Ascending aorta (tissue), 2 donors: ENCODE measurements at regions of chr4 and their contacts with region 1.

Region 1: DNA sequence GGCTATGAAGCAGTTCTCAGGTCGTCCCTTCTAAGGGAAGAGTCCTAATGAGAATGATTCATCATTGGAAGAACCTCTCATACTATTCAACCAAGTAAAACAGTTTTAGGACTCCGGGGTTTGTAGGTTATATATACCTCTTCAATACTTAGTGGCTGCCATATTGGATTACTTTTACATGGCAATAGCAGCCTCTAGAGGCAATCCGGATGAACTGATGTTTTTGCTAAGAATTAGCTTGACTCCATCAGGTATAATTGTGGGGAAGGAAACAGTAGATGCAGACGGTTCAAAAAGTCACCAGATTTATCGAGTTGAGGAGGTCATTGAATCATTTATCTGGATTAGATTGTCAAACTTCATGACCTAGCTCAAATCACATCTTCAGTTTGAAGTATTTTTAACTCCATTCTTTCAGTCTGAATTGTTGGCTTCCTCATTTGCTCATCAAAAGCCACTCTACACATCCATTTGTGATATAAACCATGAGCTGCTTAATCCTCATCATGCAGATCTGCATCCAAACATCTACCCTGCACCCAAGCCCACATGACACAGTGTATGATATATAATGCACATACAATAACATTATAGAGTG is 28.4 kb downstream of the GUCY1B1 start:
- DNase-seq: no peak
- H3K4me3 ChIP-seq: no peak overlapping the region
- H3K27ac ChIP-seq: no peak overlapping the region
- H3K4me1 ChIP-seq: peaks cover 0 to 8% of the 10 kb centered on the region in 2 donors
- H3K27me3 ChIP-seq: no peaks in the 10 kb centered on the region
- CTCF ChIP-seq: peak; percentile 47 to 75 (median 69)

Region 2: DNA sequence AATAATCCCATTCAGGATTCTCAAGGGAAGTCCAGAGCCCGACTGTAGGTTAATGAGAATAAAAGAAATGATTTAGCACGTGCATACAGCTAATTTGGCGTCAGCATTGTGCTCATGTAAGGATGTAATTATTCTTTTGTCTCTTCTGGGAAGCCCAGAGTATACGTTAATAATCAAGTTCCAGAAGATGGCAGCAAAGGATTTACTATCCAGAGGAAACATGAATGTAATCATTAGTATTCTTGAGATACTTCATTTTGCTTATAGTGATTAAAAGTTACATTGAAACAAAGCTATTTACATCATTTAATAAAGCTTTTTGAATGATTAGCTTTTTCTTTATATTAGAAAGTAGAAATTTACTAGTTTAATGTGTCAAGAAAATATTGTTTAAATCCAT is 383.3 kb before region 1 on chr4:
- intact Hi-C with region 1: loop called (anchors 2 kb)
- DNase-seq: no peak
- H3K4me3 ChIP-seq: no peak overlapping the region
- H3K27ac ChIP-seq: no peak overlapping the region
- H3K4me1 ChIP-seq: no peaks in the 10 kb centered on the region
- H3K27me3 ChIP-seq: no peaks in the 10 kb centered on the region
- CTCF ChIP-seq: peak; percentile 13 to 51 (median 19)

Region 3: DNA sequence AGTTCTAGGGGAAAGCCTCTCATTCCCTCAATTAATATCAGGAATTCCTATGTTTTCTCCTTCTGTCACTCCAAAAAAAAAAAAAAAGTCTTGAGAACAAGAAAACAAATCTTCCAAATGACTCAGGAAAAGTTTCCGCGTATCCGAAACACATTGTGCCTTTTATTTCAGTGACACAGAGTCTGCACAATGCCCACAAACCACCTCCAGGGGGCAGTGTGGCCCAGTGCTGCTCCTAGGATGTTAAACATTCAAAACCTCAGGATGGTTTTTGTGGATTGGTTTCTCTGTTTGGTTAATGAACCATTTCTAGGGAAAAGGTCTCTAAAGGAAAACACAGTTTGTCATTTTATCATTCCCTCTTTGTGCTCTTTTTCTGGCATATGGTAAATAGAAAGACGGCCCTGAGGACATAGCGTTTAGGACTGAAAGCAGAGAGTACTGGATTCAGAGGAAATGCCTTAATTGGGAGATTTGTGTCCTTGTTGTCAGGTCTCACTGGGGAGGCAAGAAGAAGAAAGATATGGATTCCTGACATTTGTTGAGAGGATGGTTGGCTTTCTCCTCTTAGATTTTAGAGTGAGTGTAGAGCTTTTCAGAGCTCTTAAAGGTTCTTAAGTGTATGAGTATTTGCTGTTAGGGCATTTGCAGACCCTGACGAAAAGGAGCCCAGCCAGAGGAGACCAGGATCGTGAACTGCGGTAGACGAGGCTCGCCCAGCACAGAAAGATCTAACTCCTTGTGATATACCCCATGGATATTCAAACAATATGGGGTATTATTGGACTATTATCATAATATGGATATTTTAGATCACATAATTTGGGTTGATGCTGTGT is 344.7 kb before region 1 on chr4:
- intact Hi-C with region 1: loop called (anchors 5 kb)
- DNase-seq: peak; percentile 35 to 92
- H3K4me3 ChIP-seq: peak overlapping the region in 1 of 2 donors; percentile 42
- H3K27ac ChIP-seq: peak overlapping the region in 1 of 2 donors; percentile 57
- H3K4me1 ChIP-seq: peaks cover 0 to 6% of the 10 kb centered on the region in 2 donors
- H3K27me3 ChIP-seq: no peaks in the 10 kb centered on the region
- CTCF ChIP-seq: peak; percentile 72 to 95 (median 87)

Region 4: GRCh38 chr4:155675709-155676429 is 111.3 kb before region 1 on chr4:
- intact Hi-C with region 1: loop called (anchors 5 kb)
- DNase-seq: no peak
- H3K4me3 ChIP-seq: peak overlapping the region in 1 of 2 donors; percentile 49
- H3K27ac ChIP-seq: peak overlapping the region; percentile 58 to 67
- H3K4me1 ChIP-seq: peaks cover 0 to 50% of the 10 kb centered on the region in 2 donors
- H3K27me3 ChIP-seq: no peaks in the 10 kb centered on the region
- CTCF ChIP-seq: no peak

Region 5: GRCh38 chr4:155722816-155723499 is 64.3 kb before region 1 on chr4:
- intact Hi-C with region 1: no loop called
- DNase-seq: no peak
- H3K4me3 ChIP-seq: no peak overlapping the region
- H3K27ac ChIP-seq: no peak overlapping the region
- H3K4me1 ChIP-seq: no peaks in the 10 kb centered on the region
- H3K27me3 ChIP-seq: no peaks in the 10 kb centered on the region
- CTCF ChIP-seq: no peak